Activated naive CD4-positive, alpha-beta T cell treated with anti-CD3 and anti-CD28 coated beads for 36 hours (primary cell): ENCODE measurements at regions of chr14 and their contacts with region 1.

Region 1: DNA sequence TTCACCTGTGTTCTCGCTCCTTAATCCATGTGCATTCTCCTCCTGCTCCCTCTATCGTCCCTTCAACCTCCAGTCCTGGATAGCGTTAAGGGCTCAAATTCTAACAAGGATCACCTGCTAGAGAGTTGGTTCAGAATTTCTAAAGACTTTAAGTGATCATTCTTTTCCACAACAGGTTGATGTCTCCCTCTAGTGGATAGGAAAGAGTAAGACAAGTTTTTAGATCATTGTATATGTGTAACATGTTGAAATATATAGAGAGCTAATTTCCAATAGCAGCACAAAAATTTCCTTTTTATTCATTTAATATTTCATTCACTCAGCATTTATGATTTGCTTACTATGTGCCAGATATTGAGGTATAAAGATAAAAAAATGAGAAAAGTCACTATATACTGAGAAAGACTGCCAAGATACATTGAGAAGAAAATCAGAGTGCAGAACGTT is 9.3 kb upstream of the ESR2 start:
- DNase-seq: no peak
- H3K4me3 Mint-ChIP-seq: no peak overlapping the region
- H3K27ac Mint-ChIP-seq: no peak overlapping the region
- H3K4me1 Mint-ChIP-seq: peaks cover 2% of the 10 kb centered on the region
- H3K27me3 Mint-ChIP-seq: peaks cover 7% of the 10 kb centered on the region

Region 2: DNA sequence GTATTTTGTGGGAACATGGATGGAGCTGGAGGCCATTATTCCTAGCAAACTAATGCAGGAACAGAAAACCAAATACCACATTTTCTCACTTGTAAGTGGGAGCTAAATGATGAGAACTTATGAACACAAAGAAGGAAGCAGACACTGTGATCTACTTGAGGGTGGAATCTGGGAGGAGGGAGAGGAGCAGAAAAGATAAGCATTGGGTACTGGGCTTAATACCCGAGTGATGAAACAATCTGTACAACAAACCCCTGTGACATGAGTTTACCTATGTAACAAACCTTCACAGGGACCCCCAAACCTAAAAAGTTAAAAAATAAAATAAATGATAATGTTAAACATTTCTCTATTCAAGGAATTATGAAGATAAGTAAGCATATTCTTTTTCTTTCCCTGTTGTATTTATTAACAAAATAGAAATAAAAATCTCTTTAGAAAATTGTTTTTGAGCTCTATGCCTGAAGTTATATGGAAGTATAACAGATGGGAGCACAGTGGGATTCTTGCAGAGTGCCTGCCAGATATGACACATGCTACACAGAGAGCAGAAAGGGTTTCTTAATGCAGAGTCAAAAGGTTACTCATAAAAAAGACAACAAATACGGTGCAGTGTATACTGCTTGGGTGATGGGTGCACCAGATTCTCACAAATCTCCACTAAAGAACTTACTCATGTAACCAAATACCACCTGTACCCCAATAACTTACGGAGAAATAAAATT is 502.7 kb before region 1 on chr14:
- CTCF ChIA-PET with region 1: interaction called, 28 read pairs
- intact Hi-C with region 1: loop called (anchors 2 kb)
- DNase-seq: no peak
- H3K4me3 Mint-ChIP-seq: no peak overlapping the region
- H3K27ac Mint-ChIP-seq: no peak overlapping the region
- H3K4me1 Mint-ChIP-seq: no peaks in the 10 kb centered on the region
- H3K27me3 Mint-ChIP-seq: no peaks in the 10 kb centered on the region

Region 3: DNA sequence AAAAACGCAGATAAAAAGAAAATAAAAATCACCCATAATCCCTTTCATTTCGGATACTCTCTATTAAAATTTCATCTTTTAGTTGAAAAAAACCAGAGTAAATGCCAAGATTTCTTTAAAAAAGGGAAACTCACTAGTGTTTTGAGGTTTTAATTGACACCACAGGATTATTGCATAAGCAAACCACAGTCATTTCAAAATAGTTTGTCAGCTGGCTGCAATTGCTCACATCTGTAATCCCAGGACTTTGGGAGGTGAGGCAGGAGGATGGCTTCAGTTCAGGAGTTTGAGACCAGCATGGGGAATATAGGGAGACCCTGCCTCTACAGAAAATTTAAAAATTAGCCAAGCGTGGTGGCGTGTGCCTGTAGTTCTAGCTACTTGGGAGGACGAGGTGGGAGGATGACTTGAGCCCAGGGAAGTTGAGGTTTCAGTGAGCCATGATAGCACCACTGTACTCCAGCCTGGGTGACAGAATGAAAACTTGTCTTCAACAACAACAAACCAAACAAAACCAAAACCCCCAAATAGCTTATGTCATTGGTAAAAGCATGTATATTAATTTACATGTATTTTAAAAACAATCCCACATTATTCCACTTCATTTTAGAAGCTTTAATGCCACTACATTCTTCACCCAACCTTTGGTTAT is 401.9 kb before region 1 on chr14:
- CTCF ChIA-PET with region 1: no interaction called
- intact Hi-C with region 1: no loop called
- DNase-seq: no peak
- H3K4me3 Mint-ChIP-seq: no peak overlapping the region
- H3K27ac Mint-ChIP-seq: no peak overlapping the region
- H3K4me1 Mint-ChIP-seq: peaks cover 38% of the 10 kb centered on the region
- H3K27me3 Mint-ChIP-seq: no peaks in the 10 kb centered on the region

Region 4: DNA sequence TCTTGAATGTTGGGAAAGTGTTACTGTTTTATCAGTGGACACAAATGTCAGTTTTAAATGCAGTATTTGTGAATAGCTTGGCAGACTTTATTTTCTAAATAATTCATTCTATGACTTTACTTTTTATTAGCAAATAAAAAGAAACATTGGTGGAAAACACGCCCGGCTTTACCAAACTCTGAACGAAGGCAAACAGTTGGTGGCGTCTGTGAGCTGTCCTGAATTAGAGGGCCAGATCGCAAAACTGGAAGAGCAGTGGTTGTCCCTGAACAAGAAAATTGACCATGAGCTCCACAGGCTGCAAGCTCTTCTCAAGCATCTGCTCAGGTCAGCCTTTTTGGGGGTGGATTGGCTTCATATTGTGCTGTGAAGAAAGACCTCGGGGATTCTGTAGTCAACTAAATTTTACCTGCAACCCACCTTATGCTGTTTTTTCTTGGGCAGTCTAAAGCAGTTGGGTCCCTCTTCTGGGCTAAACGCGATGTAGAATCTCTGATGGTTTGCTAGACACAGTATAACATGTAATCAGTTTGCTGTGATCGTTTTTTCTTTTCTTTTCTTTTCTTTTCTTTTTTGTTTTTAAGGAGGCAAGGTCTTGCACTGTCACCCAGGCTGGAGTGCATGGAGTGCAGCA is 165.7 kb before region 1 on chr14:
- CTCF ChIA-PET with region 1: interaction called, 12 read pairs
- intact Hi-C with region 1: no loop called
- DNase-seq: no peak
- H3K4me3 Mint-ChIP-seq: no peak overlapping the region
- H3K27ac Mint-ChIP-seq: no peak overlapping the region
- H3K4me1 Mint-ChIP-seq: no peaks in the 10 kb centered on the region
- H3K27me3 Mint-ChIP-seq: no peaks in the 10 kb centered on the region

Region 5: GRCh38 chr14:64324895-64325294 is 21.4 kb after region 1 on chr14:
- CTCF ChIA-PET with region 1: interaction called, 14 read pairs
- intact Hi-C with region 1: no loop called
- DNase-seq: no peak
- H3K4me3 Mint-ChIP-seq: no peak overlapping the region
- H3K27ac Mint-ChIP-seq: no peak overlapping the region
- H3K4me1 Mint-ChIP-seq: no peaks in the 10 kb centered on the region
- H3K27me3 Mint-ChIP-seq: peaks cover 9% of the 10 kb centered on the region